ENCODE measurements at regions of chr18 and their contacts with region 1.

Region 1: DNA sequence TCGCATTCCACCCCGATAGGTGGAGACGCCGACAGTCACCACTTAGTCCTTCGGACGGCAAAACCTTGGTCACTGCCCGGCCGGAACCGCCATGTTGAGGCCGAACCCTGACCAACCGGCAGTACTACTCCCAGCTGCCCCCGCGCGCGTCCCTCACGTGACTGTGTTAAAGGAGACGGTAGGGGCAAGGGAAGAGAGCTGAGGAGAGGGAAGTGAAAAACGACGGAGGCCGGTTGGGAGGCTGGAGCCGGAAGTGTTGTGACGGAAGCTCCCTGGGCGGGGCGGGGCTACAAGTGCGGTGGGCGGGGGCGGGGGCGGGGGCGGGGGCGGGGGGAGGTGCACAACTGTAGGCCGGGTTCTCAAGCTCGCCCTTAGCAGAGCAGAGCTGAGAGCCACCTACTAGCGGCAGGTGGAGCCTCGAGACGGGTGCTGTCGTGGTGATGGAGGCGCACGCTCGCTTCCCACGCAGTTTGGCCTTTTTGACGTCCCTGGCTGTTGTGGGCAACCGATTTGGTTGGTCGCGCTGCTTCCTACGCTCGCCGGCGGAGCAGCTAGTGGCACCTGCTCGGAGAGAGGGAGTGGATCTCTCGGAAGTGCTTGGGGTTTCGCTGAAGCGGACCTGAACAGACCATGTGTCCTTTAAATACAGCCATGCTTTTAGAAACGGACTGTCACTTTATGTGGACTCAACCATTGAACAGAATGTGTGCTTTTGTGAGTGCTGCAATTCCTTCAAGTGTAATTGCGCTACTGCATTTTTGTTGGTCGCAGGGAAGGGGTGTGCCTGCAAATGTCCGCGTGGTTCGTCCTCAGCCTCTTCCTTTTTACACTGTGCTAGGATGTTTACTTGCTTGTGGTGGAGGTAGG is at the start of gene TRAPPC8:
- DNase-seq: peak; percentile 97 to 100 (median 99)

Region 2: GRCh38 chr18:32018331-32019250 is 75.4 kb after region 1 on chr18 and contains the start of gene RNF125:
- intact Hi-C with region 1: loop called (anchors 5 kb)
- DNase-seq: peak; percentile 33 to 88 (median 75)

Region 3: GRCh38 chr18:32092422-32093101 is 149.3 kb after region 1 on chr18:
- intact Hi-C with region 1: loop called (anchors 5 kb)
- DNase-seq: peak; percentile 95 to 100 (median 100)